ENCODE measurements at regions of chr5 and their contacts with region 1.

Region 1: DNA sequence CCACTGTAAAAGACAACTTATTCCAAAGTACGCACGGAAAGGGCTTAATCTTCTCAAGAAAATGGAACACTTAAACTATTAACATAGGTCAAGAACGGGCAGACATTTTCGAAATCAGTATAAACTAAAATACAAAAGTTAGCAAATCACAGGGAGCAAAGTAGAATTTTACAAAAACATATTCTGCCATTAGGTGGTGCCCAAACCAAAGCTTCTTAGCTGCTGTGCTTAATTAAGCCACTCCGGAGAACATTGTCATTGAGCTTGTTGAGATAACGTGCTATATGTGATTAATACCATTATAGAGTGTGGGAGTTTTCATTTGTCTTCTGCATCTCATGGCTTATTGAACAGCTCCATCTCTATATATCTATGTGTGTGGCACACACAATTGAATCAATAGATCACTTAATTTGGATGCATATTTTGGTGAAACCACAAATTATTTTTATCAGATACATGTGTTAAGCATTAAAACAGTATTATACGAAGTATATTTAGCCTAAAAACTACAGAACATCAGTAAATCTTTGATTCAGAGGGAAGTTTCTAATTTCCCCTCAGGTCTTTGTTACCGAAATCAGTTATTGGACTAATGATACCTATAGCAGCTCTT is 23.4 kb downstream of the UBLCP1 start:
- DNase-seq: peak; percentile 55
- H3K4me3 ChIP-seq: no peak overlapping the region
- H3K27ac ChIP-seq: no peak overlapping the region
- H3K4me1 ChIP-seq: no peaks in the 10 kb centered on the region
- H3K27me3 ChIP-seq: no peaks in the 10 kb centered on the region
- CTCF ChIP-seq: peak; percentile 52

Region 2: GRCh38 chr5:159061179-159061796 is 225.2 kb before region 1 on chr5:
- CTCF ChIA-PET with region 1: no interaction called
- POLR2A ChIA-PET with region 1: no interaction called
- intact Hi-C with region 1: no loop called
- DNase-seq: no peak
- H3K4me3 ChIP-seq: no peak overlapping the region
- H3K27ac ChIP-seq: no peak overlapping the region
- H3K4me1 ChIP-seq: no peaks in the 10 kb centered on the region
- H3K27me3 ChIP-seq: no peaks in the 10 kb centered on the region
- CTCF ChIP-seq: no peak

Region 3: DNA sequence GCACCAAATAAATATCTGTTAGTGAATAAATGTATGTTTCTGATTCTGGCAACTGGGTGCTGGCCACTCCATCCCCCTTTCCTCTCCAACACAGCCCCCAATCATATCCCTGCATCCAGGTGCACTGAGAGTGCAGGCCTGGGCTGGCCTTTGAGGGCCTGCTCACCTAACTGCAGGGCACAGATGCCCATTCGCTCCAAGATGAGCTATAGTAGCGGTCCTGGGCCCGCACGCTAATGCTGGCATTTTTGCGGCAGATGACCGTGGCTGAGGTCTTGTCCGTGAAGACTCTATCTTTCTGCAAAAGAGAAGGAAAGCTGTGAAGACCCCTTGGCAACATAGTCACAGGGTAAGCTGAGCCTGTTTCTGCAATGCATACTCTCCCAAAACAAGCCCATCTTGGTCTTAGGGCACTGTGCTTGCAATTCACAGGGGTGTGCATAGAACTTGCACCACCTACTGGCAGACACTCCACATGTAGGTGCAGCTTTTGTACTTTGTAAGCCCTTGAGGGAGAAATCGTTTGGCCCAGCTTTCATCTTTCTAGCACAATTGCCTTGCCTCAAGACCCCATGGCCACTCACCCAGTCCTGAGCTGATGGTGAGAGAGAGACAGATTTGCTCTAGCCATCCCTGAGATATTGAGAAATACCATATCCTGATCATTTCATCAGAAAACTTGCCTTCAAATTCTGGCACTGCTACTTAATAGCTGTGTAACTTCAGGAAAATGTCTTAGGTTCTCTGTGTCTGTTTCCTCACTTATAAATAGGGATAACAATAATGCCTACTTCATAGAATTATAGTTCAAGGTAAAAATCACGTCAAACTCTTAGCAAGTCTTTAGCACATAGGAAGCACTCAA is 30.2 kb after region 1 on chr5:
- CTCF ChIA-PET with region 1: interaction called, 12 read pairs
- POLR2A ChIA-PET with region 1: no interaction called
- intact Hi-C with region 1: loop called (anchors 1 kb)
- DNase-seq: peak; percentile 52
- H3K4me3 ChIP-seq: no peak overlapping the region
- H3K27ac ChIP-seq: no peak overlapping the region
- H3K4me1 ChIP-seq: no peaks in the 10 kb centered on the region
- H3K27me3 ChIP-seq: no peaks in the 10 kb centered on the region
- CTCF ChIP-seq: peak; percentile 70

Region 4: GRCh38 chr5:159430361-159431012 is 144.0 kb after region 1 on chr5:
- CTCF ChIA-PET with region 1: interaction called, 12 read pairs
- POLR2A ChIA-PET with region 1: no interaction called
- intact Hi-C with region 1: no loop called
- DNase-seq: no peak
- H3K4me3 ChIP-seq: no peak overlapping the region
- H3K27ac ChIP-seq: no peak overlapping the region
- H3K4me1 ChIP-seq: no peaks in the 10 kb centered on the region
- H3K27me3 ChIP-seq: peaks cover 6% of the 10 kb centered on the region
- CTCF ChIP-seq: no peak

Region 5: GRCh38 chr5:159915904-159916840 is 629.6 kb after region 1 on chr5 and contains the start of gene ADRA1B:
- CTCF ChIA-PET with region 1: no interaction called
- POLR2A ChIA-PET with region 1: no interaction called
- intact Hi-C with region 1: loop called (anchors 5 kb)
- DNase-seq: peak; percentile 37
- H3K4me3 ChIP-seq: peak within 1 kb of the TSS; percentile 24
- H3K27ac ChIP-seq: no peak within 1 kb of the TSS
- H3K4me1 ChIP-seq: no peaks in the 10 kb centered on the region
- H3K27me3 ChIP-seq: peaks cover 81% of the 10 kb centered on the region
- CTCF ChIP-seq: peak; percentile 37
- total RNA-seq, gene ADRA1B: not detected in 2 replicates

Region 6: GRCh38 chr5:159987031-159987674 is 700.6 kb after region 1 on chr5:
- CTCF ChIA-PET with region 1: no interaction called
- POLR2A ChIA-PET with region 1: no interaction called
- intact Hi-C with region 1: loop called (anchors 5 kb)
- DNase-seq: peak; percentile 56
- H3K4me3 ChIP-seq: peak overlapping the region; percentile 39
- H3K27ac ChIP-seq: no peak overlapping the region
- H3K4me1 ChIP-seq: no peaks in the 10 kb centered on the region
- H3K27me3 ChIP-seq: peaks cover 33% of the 10 kb centered on the region
- CTCF ChIP-seq: peak; percentile 70

Region 7: GRCh38 chr5:160399402-160400353 is 1113.2 kb after region 1 on chr5 and contains the start of gene FAM200C:
- CTCF ChIA-PET with region 1: no interaction called
- POLR2A ChIA-PET with region 1: no interaction called
- intact Hi-C with region 1: loop called (anchors 10 kb)
- DNase-seq: peak; percentile 95
- H3K4me3 ChIP-seq: peak within 1 kb of the TSS; percentile 67
- H3K27ac ChIP-seq: peak within 1 kb of the TSS; percentile 93
- H3K4me1 ChIP-seq: peaks cover 3% of the 10 kb centered on the region
- H3K27me3 ChIP-seq: no peaks in the 10 kb centered on the region
- CTCF ChIP-seq: no peak
- total RNA-seq, gene FAM200C: 6.3 TPM in 2 replicates

Measured in A673 (cell line).